ENCODE measurements at regions of chr10 and their contacts with region 1.

Region 1: GRCh38 chr10:63268798-63269503 is 135.8 kb downstream of the NRBF2 start:
- DNase-seq: peak; percentile 98
- H3K4me3 ChIP-seq: peak overlapping the region; percentile 75 to 99 (median 85)
- H3K27ac ChIP-seq: peak overlapping the region; percentile 92
- H3K4me1 ChIP-seq: peaks cover 31% of the 10 kb centered on the region
- H3K27me3 ChIP-seq: no peaks in the 10 kb centered on the region
- CTCF ChIP-seq: peak in 1 of 2 donors; percentile 23
- POLR2A ChIP-seq: peak; percentile 99

Region 2: DNA sequence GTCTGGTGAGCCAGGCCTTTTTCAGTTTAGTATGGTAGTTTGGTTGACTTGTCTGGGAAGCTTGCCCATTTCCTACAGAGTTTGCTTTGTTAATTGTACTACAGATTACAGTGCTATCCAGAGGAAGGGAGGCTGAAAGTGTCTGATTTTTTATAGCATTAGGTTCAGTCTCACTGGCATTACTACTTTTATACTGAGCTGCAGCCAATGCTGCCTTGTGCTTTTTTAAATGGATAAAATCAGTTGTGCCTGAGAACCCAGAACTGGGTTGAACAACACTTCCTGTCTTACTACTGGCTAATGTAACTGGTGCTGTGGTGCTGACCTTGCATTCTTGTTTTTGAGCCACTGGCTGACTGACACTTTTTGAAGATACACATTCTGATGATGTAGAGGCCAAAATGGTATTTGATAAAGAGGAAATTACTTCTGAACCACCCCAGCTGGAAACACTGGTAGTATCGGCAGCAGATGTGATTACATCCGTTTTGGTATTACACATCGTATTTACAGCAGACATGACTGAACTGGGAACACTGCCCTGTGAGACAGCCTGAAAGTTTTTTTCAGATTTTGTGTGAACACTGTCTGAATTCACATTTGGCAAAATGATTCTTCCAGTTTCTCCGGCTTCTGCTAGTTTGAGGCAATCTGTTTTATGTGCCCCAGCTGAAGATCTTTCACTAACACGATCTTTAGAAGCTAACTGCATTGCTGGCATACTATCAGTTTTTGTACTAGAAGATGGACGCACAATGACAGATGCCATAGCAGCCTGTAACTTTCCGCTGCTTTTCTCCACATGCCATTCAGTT is 61.7 kb before region 1 on chr10:
- CTCF ChIA-PET with region 1: interaction called, 5 read pairs
- POLR2A ChIA-PET with region 1: no interaction called
- dilution Hi-C with region 1: no loop called
- intact Hi-C with region 1: loop called (anchors 1 kb)
- DNase-seq: peak; percentile 96
- H3K4me3 ChIP-seq: no peak overlapping the region
- H3K27ac ChIP-seq: peak overlapping the region; percentile 87
- H3K4me1 ChIP-seq: peaks cover 54% of the 10 kb centered on the region
- H3K27me3 ChIP-seq: no peaks in the 10 kb centered on the region
- CTCF ChIP-seq: no peak
- POLR2A ChIP-seq: no peak

Region 3: GRCh38 chr10:63241841-63242281 is 27.1 kb before region 1 on chr10:
- CTCF ChIA-PET with region 1: interaction called, 7 read pairs
- POLR2A ChIA-PET with region 1: interaction called, 8 read pairs
- dilution Hi-C with region 1: no loop called
- intact Hi-C with region 1: loop called (anchors 2 kb)
- DNase-seq: peak; percentile 82
- H3K4me3 ChIP-seq: peak overlapping the region in 1 of 3 experiments; percentile 19
- H3K27ac ChIP-seq: peak overlapping the region; percentile 67
- H3K4me1 ChIP-seq: peaks cover 59% of the 10 kb centered on the region
- H3K27me3 ChIP-seq: no peaks in the 10 kb centered on the region
- CTCF ChIP-seq: no peak
- POLR2A ChIP-seq: peak; percentile 32

Region 4: DNA sequence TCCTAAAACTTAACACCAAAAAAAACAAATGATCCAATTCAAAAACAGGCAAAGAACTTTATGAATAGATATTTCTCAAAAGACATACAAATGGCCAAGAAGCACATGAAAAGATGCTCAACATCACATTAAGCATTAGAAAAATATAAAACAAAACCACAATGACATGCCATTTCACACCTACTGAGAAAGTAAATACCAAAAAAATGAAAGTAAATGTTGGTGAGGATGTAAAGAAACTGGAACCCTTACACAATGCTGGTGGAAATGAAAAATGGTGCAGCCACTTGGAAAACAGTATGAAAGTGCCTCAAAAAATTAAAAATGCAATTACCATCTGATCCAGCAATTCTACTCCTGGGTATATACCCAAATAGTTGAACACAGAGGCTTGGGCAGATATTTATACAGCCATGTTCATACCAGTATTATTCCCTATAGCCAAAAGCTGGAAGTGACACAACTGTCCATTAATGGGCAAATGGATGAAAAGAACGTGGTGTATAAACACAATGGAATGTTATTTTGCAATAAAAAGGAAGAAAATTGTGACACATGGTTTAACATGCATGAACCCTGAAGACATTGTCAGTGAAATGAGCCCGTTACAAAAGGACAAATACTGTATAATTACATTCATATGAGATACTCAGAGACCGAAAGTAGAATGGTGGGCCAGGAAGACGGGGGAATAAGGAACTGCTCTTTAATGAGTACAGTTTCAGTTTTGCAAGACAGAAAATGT is 107.8 kb after region 1 on chr10:
- CTCF ChIA-PET with region 1: no interaction called
- POLR2A ChIA-PET with region 1: interaction called, 3 read pairs
- dilution Hi-C with region 1: no loop called
- intact Hi-C with region 1: loop called (anchors 1 kb)
- DNase-seq: peak; percentile 37
- H3K4me3 ChIP-seq: no peak overlapping the region
- H3K27ac ChIP-seq: no peak overlapping the region
- H3K4me1 ChIP-seq: peaks cover 22% of the 10 kb centered on the region
- H3K27me3 ChIP-seq: no peaks in the 10 kb centered on the region
- CTCF ChIP-seq: no peak
- POLR2A ChIP-seq: no peak

Region 5: DNA sequence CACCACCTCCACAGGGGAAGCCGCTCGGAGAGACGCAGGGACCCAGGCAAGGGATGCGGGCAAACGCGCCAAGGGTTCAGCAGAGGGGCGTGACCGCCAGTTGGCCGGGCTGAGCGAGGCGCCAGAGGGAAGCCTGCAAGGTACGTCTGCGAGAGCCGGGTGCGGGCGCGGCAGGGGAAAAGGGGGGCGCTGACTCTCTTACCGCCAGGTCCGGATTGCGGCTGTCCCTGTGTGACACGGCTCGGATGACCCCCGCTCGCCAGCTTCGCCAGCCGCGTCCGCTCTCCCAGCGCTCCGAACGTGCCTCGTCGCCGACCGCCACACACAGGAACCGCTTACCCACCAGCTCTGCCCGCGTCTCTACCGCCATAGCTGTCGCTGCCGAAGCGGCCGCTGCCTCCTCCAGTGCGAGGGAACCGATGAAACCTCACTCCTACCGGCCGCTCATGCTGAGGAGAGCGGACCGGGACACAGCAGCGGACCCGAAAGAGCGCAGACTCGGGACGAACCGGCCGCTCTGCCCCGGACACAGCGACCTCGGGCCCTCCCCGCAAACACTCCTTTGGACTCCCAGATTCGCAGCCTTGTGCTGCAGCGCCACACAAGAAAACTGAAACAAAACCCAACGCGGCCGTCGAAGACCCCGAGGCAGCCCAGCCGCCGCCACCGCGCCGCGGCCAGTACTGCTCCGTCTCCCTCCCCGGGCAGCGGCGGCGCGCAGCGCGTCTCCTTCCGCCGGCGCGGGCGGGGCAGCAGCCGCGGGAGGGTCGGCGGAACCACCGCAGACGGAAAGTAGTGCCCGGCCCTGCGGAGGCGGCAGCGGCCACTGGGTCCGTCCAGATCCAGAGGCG is 196.6 kb after region 1 on chr10 and contains the start of gene JMJD1C:
- CTCF ChIA-PET with region 1: interaction called, 8 read pairs
- POLR2A ChIA-PET with region 1: interaction called, 14 read pairs
- dilution Hi-C with region 1: no loop called
- intact Hi-C with region 1: loop called (anchors 1 kb)
- DNase-seq: peak; percentile 80
- H3K4me3 ChIP-seq: peak within 1 kb of the TSS; percentile 55 to 98 (median 83)
- H3K27ac ChIP-seq: peak within 1 kb of the TSS; percentile 82
- H3K4me1 ChIP-seq: peaks cover 5% of the 10 kb centered on the region
- H3K27me3 ChIP-seq: no peaks in the 10 kb centered on the region
- CTCF ChIP-seq: peak in 1 of 2 donors; percentile 12
- POLR2A ChIP-seq: peak; percentile 84
- total RNA-seq, gene JMJD1C: 93.3 and 97.1 TPM in 2 replicates

Region 6: GRCh38 chr10:63573068-63573697 is 304.2 kb after region 1 on chr10:
- CTCF ChIA-PET with region 1: interaction called, 3 read pairs
- POLR2A ChIA-PET with region 1: no interaction called
- dilution Hi-C with region 1: no loop called
- intact Hi-C with region 1: loop called (anchors 5 kb)
- DNase-seq: peak; percentile 95
- H3K4me3 ChIP-seq: peak overlapping the region in 1 of 3 experiments; percentile 16
- H3K27ac ChIP-seq: peak overlapping the region; percentile 68
- H3K4me1 ChIP-seq: peaks cover 33% of the 10 kb centered on the region
- H3K27me3 ChIP-seq: no peaks in the 10 kb centered on the region
- CTCF ChIP-seq: no peak
- POLR2A ChIP-seq: no peak

Region 7: GRCh38 chr10:63767138-63767801 is 498.3 kb after region 1 on chr10:
- CTCF ChIA-PET with region 1: interaction called, 3 read pairs
- POLR2A ChIA-PET with region 1: no interaction called
- dilution Hi-C with region 1: no loop called
- intact Hi-C with region 1: loop called (anchors 5 kb)
- DNase-seq: peak; percentile 70
- H3K4me3 ChIP-seq: no peak overlapping the region
- H3K27ac ChIP-seq: no peak overlapping the region
- H3K4me1 ChIP-seq: no peaks in the 10 kb centered on the region
- H3K27me3 ChIP-seq: no peaks in the 10 kb centered on the region
- CTCF ChIP-seq: peak in 1 of 2 donors; percentile 33
- POLR2A ChIP-seq: no peak